ENCODE measurements at regions of chr6 and their contacts with region 1.

Region 1: DNA sequence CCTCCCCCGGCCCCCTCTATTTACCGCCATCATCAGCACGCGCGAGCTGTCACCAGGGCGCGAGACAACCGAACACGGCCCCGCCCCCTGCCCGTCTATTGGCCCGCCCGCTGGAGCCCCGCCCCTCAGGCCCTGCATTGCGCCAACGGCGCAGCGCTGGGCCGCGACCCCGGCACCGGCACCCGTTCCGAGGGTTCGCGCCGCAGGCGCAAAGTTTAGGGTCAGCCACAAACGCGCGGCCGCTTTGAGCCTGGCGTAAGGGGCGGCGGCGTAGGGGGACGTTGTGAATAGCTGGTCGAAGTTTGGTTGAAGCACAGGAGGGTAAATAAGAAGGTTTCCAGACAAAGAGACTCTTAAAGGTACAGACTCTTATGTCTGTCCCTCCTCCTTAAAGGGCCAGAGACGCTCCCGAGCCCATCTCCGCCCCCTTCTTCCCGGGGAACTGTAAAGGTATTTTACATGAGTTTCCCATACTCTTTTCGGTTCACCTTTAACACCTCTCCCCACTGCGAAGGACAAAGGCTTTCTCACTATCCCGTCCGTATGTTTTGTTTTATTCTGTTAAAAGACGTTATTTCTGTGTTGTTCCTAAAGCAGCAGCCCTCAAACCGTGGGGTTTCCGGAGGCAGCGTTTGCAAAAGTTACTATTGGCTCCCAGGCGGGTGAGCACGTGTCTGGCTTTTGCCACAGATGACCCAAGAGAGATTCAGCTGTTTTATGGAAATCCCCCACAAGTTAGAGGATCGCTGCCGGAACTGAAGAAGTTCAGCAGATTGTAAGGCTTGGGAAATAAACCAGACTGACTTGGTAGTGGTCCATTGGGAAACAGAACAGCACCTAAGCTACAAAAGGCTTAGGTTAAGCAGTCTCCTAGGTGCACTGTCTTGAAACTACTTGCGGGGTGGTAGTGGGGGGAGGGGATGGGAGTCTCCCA is at the start of gene USP49:
- H3K4me3 ChIP-seq: peak within 1 kb of the TSS; percentile 89
- H3K27ac ChIP-seq: peak within 1 kb of the TSS; percentile 61
- H3K4me1 ChIP-seq: peaks cover 9% of the 10 kb centered on the region; the same call in 1 of the 2 replicates
- CTCF ChIP-seq: no peak

Region 2: DNA sequence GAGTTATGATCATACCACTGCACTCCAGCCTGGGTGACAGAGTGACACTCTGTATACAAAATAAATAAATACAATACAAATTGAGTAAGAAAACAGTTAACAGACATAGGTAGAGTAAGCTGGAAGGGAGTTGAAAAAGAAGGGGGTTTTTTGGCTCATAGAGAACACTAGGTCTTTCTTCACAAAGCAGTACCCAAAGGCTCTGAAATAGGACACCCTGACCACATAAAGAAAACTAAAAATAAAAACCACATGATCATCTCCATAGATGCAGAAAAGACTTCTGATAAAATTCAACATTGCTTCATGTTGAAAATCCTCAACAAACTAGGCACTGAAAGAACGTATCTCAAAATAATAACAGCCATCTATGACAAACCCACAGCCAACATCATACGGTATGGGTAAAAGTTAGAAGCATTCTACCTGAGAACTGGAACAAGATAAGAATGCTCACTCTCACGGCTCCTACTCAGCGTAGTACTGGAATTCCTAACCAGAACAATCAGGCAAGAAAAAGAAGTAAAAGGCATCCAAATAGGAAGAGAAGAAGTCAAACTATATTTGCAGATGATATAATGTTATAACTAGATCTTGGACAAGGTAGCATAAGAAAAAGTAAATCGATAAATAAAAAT is 59.4 kb before region 1 on chr6:
- CTCF ChIA-PET with region 1: interaction called, 3 read pairs
- POLR2A ChIA-PET with region 1: interaction called, 11 read pairs
- H3K4me3 ChIP-seq: no peak overlapping the region
- H3K27ac ChIP-seq: no peak overlapping the region
- H3K4me1 ChIP-seq: no peaks in the 10 kb centered on the region
- CTCF ChIP-seq: no peak